ENCODE measurements at regions of chr12 and their contacts with region 1.

Region 1: DNA sequence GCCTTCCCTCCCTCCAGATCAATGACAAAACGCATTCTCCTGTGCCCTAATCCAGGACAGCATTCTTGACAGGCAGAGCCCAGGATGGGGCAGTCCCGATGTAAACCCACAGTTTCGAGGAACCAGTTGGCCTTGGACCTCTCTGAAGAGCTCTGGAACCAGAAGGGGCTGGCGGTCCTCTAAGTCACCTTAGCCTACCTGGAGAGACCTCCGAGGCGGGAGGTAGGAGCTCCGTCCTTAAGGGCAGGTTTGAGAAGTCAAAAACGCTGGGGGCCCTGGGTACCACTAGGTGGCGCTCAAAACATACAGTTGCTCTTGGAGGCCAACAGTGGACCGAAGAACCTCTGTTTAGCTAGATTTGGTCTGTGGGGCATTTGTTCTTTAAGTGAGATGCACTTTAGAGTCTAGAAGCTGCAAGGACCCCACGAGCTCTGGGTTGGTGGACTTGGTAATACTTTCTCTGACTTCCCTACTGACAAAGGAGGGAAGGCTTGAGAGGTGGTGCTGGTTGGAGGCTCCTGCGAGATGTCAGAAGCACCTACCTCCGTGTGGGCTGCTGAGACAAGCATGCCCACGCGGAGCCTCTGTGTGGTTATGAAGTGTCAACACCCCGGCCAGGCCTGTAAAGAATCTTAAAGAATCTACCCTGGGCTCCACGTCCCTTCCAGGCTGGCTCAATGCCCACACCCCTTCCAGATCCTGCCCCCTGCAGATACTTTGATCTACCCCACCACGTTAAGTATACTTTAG is 74.8 kb upstream of the CHST11 start:
- DNase-seq: peak; percentile 78
- H3K4me3 ChIP-seq: peak overlapping the region in 1 of 2 experiments; percentile 3; a peak in 1 of 4 replicates
- H3K27ac ChIP-seq: no peak overlapping the region
- H3K4me1 ChIP-seq: peaks cover 0 to 1% of the 10 kb centered on the region in 2 experiments; a peak in 1 of 4 replicates
- H3K27me3 ChIP-seq: no peaks in the 10 kb centered on the region
- CTCF ChIP-seq: peak; percentile 98
- EP300 ChIP-seq: no peak
- RAD21 ChIP-seq: peak; percentile 97

Region 2: DNA sequence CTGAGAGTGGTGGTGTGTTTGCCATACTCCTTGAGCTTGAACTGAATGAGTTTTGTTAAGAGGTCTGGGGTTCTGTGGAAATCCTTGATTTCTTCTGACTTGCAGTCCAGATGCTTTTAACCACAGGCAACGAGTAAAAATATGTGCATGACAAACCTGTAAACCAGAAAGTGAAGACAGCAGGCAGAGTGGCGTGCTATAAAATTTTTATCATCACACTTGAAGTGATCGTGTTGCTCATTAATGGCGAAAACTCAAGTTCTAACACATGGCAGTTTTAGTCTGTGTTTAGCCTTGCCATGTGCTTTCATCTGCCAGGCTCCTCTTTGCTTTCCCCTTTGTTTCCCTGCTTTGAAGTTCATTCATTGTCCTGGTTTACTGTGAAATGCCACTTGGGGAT is 138.4 kb before region 1 on chr12:
- CTCF ChIA-PET with region 1: no interaction called
- POLR2A ChIA-PET with region 1: no interaction called
- DNase-seq: no peak
- H3K4me3 ChIP-seq: no peak overlapping the region
- H3K27ac ChIP-seq: no peak overlapping the region
- H3K4me1 ChIP-seq: no peaks in the 10 kb centered on the region
- H3K27me3 ChIP-seq: no peaks in the 10 kb centered on the region
- CTCF ChIP-seq: no peak
- EP300 ChIP-seq: no peak
- RAD21 ChIP-seq: no peak

Region 3: GRCh38 chr12:104371043-104371870 is 10.6 kb before region 1 on chr12:
- CTCF ChIA-PET with region 1: interaction called, 31 read pairs
- POLR2A ChIA-PET with region 1: no interaction called
- DNase-seq: no peak
- H3K4me3 ChIP-seq: no peak overlapping the region
- H3K27ac ChIP-seq: no peak overlapping the region
- H3K4me1 ChIP-seq: no peaks in the 10 kb centered on the region
- H3K27me3 ChIP-seq: no peaks in the 10 kb centered on the region
- CTCF ChIP-seq: no peak
- EP300 ChIP-seq: no peak
- RAD21 ChIP-seq: no peak

Region 4: DNA sequence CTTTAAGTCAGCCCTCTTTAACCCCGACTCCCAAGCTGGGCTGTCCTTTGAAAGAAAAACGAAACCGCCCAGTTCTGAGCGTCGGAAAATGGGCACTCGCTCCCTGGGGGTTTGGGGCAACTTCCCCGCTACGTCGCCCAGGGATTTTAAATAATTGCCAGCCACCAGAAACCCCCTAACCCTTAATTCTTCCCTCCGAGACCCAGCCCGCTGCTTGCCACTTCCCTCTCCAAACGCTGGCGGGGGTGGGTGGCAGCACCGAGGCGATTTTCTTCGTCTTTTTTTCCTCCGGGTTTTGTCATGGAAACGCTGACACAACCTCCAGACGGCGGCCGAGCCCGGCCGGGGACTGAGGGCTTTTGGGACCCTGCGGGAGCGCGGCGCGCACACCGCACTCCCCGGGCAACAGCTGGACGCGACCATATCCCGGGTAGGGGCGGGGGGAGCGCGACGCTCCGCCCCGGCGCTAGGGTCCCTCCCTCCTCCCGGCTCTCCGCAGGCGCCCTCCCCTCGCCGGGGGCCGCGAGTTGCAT is 74.6 kb after region 1 on chr12 and contains the start of gene CHST11:
- CTCF ChIA-PET with region 1: interaction called, 26 read pairs
- POLR2A ChIA-PET with region 1: no interaction called
- DNase-seq: peak; percentile 98
- H3K4me3 ChIP-seq: peak within 1 kb of the TSS; percentile 92 to 100
- H3K27ac ChIP-seq: peak within 1 kb of the TSS; percentile 55 to 79
- H3K4me1 ChIP-seq: peaks cover 5 to 15% of the 10 kb centered on the region in 2 experiments; a peak in 1 of 4 replicates
- H3K27me3 ChIP-seq: no peaks in the 10 kb centered on the region
- CTCF ChIP-seq: peak; percentile 41
- EP300 ChIP-seq: peak in 1 of 2 experiments; percentile 5; a peak in 1 of 4 replicates
- RAD21 ChIP-seq: no peak
- polyA plus RNA-seq, gene CHST11: 12.7 and 18.6 TPM in 2 replicates

Region 5: GRCh38 chr12:104733717-104734175 is 351.8 kb after region 1 on chr12:
- CTCF ChIA-PET with region 1: interaction called, 16 read pairs
- POLR2A ChIA-PET with region 1: no interaction called
- DNase-seq: peak; percentile 52
- H3K4me3 ChIP-seq: no peak overlapping the region
- H3K27ac ChIP-seq: no peak overlapping the region
- H3K4me1 ChIP-seq: peaks cover 0 to 68% of the 10 kb centered on the region in 2 experiments; a peak in 2 of 4 replicates
- H3K27me3 ChIP-seq: no peaks in the 10 kb centered on the region
- CTCF ChIP-seq: peak; percentile 51
- EP300 ChIP-seq: no peak
- RAD21 ChIP-seq: peak; percentile 55

Region 6: DNA sequence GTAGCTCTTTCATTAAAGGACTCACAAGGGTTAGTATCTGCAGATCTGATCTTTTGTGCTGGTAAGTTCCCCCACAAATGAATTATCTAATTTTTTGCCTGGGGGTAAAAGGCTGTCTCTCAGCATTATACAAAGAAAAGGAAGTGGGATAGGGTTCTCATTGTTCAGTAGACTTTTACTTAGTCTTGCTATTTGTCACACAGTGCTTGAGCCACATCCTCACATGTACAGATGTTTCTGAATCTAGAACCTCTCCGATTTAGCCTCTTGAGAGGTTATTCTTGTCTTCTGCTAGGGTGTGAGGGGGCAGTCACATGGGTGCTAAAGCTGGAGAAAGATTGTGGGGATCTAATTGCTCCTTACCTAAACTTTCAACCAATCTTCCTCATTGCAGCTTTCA is 483.2 kb after region 1 on chr12:
- CTCF ChIA-PET with region 1: interaction called, 13 read pairs
- POLR2A ChIA-PET with region 1: no interaction called
- DNase-seq: no peak
- H3K4me3 ChIP-seq: no peak overlapping the region
- H3K27ac ChIP-seq: no peak overlapping the region
- H3K4me1 ChIP-seq: peaks cover 0 to 21% of the 10 kb centered on the region in 2 experiments; a peak in 3 of 4 replicates
- H3K27me3 ChIP-seq: no peaks in the 10 kb centered on the region
- CTCF ChIP-seq: no peak
- EP300 ChIP-seq: no peak
- RAD21 ChIP-seq: no peak

Region 7: DNA sequence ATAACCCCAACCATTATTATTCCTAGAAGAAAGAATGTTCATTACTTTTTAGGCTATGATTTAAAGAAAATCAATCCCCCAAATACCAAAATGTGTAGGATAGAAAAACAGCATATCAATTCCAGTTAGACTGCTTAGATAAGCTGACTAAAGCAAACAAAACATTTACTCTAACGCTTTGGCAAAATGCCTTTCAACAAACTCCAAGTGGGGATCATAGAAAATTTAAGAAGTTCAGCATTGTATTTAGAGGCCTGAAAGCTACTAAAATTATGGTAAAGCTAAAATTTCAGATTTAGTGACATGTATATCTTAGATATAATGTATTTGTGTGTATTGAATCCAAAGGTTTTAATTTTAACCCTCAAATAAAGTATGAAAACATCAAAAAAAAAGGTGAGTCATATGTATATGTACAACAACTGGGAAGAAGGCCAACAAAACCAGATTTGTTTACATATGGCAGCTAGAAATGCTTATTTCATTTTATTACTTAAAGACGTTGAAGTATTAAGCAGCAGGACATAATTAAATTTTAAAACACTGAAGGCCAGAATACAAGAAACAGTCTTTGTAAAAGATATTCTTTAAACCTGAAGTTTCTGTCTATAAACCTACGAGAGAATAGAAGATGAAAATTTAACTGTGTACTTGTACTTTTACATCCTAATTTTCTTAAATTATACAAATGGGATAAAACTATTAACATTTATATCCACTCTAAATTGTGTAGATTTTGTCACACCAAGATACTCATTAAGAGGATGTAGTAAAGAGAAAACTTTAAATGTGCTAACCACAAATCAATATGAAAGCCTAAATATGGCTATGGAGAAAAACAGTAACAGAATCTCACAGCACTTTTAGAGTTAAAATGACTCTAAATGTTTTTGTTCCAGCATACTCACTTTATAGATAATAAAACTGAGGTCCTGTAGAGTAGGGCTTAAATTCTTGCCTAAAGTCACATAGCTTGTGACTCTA is 504.8 kb after region 1 on chr12:
- CTCF ChIA-PET with region 1: interaction called, 43 read pairs
- POLR2A ChIA-PET with region 1: no interaction called
- DNase-seq: no peak
- H3K4me3 ChIP-seq: no peak overlapping the region
- H3K27ac ChIP-seq: no peak overlapping the region
- H3K4me1 ChIP-seq: peaks cover 0 to 7% of the 10 kb centered on the region in 2 experiments; a peak in 2 of 4 replicates
- H3K27me3 ChIP-seq: no peaks in the 10 kb centered on the region
- CTCF ChIP-seq: no peak
- EP300 ChIP-seq: no peak
- RAD21 ChIP-seq: no peak

Region 8: DNA sequence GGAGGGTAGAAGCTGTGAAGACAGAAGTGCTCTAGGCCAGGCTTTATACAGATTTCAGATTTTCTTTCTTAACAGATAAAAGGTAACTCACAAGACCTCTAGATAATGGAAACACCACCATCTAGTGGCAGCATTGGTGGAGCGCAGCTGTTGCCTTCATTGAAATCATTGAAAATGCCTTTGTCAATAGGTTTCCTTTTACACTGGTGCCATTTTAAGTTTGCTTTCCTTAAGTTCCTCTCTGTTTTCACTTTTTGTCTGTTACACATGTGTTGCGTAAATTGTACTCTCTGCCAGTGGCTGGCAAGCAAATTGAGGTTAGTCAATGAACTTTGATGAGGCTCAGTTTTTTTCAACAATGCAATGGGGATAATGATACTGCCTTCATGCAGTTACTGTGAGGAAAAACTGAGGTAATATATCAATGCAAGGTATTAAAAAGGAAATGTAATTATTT is 671.2 kb after region 1 on chr12:
- CTCF ChIA-PET with region 1: interaction called, 34 read pairs
- POLR2A ChIA-PET with region 1: no interaction called
- DNase-seq: peak; percentile 55
- H3K4me3 ChIP-seq: no peak overlapping the region; a peak in 1 of 4 replicates
- H3K27ac ChIP-seq: no peak overlapping the region
- H3K4me1 ChIP-seq: no peaks in the 10 kb centered on the region; a peak in 1 of 4 replicates
- H3K27me3 ChIP-seq: no peaks in the 10 kb centered on the region
- CTCF ChIP-seq: peak; percentile 94
- EP300 ChIP-seq: no peak
- RAD21 ChIP-seq: peak; percentile 95

Measured in SK-N-SH (cell line).